ENCODE measurements at regions of chr1 and their contacts with region 1.

Region 1: GRCh38 chr1:59290193-59290947 is 6.5 kb upstream of the FGGY start:
- DNase-seq: peak; percentile 58 to 86
- ATAC-seq: peak; percentile 72 to 85
- H3K4me3 ChIP-seq: no peak overlapping the region
- H3K27ac ChIP-seq: peak overlapping the region; percentile 90 to 99 (median 96)
- H3K4me1 ChIP-seq: peaks cover 27 to 40% of the 10 kb centered on the region in 2 donors
- H3K27me3 ChIP-seq: no peaks in the 10 kb centered on the region
- CTCF ChIP-seq: peak; percentile 11 to 51 (median 35)
- POLR2A ChIP-seq: no peak

Region 2: GRCh38 chr1:59020151-59020997 is 270.0 kb before region 1 on chr1:
- in situ Hi-C with region 1: no loop called
- intact Hi-C with region 1: loop called (anchors 5 kb)
- DNase-seq: peak; percentile 31 to 69
- ATAC-seq: peak; percentile 72 to 73
- H3K4me3 ChIP-seq: peak overlapping the region; percentile 35 to 48 (median 36)
- H3K27ac ChIP-seq: peak overlapping the region; percentile 93 to 96 (median 95)
- H3K4me1 ChIP-seq: peaks cover 25 to 33% of the 10 kb centered on the region in 2 donors
- H3K27me3 ChIP-seq: no peaks in the 10 kb centered on the region
- CTCF ChIP-seq: no peak
- POLR2A ChIP-seq: no peak

Region 3: GRCh38 chr1:59083946-59084865 is 206.2 kb before region 1 on chr1:
- in situ Hi-C with region 1: no loop called
- intact Hi-C with region 1: no loop called
- DNase-seq: no peak
- ATAC-seq: peak; percentile 34 to 51
- H3K4me3 ChIP-seq: no peak overlapping the region
- H3K27ac ChIP-seq: peak overlapping the region in 3 of 4 donors; percentile 12 to 52 (median 24)
- H3K4me1 ChIP-seq: peaks cover 0 to 10% of the 10 kb centered on the region in 2 donors
- H3K27me3 ChIP-seq: no peaks in the 10 kb centered on the region
- CTCF ChIP-seq: no peak
- POLR2A ChIP-seq: no peak

Region 4: GRCh38 chr1:59136541-59137275 is 153.7 kb before region 1 on chr1:
- in situ Hi-C with region 1: loop called in 1 of 4 experiments (anchors 10 kb)
- intact Hi-C with region 1: loop called (anchors 2 kb)
- DNase-seq: peak; percentile 64 to 82
- ATAC-seq: peak; percentile 62 to 74
- H3K4me3 ChIP-seq: no peak overlapping the region
- H3K27ac ChIP-seq: peak overlapping the region; percentile 85 to 91 (median 88)
- H3K4me1 ChIP-seq: peaks cover 32 to 42% of the 10 kb centered on the region in 2 donors
- H3K27me3 ChIP-seq: no peaks in the 10 kb centered on the region
- CTCF ChIP-seq: no peak
- POLR2A ChIP-seq: no peak

Region 5: GRCh38 chr1:59229138-59229537 is 61.2 kb before region 1 on chr1:
- in situ Hi-C with region 1: no loop called
- intact Hi-C with region 1: loop called (anchors 1 kb)
- DNase-seq: no peak
- ATAC-seq: peak; percentile 94 to 95
- H3K4me3 ChIP-seq: no peak overlapping the region
- H3K27ac ChIP-seq: peak overlapping the region; percentile 60 to 81 (median 78)
- H3K4me1 ChIP-seq: peaks cover 30 to 38% of the 10 kb centered on the region in 2 donors
- H3K27me3 ChIP-seq: no peaks in the 10 kb centered on the region
- CTCF ChIP-seq: no peak
- POLR2A ChIP-seq: no peak

Region 6: DNA sequence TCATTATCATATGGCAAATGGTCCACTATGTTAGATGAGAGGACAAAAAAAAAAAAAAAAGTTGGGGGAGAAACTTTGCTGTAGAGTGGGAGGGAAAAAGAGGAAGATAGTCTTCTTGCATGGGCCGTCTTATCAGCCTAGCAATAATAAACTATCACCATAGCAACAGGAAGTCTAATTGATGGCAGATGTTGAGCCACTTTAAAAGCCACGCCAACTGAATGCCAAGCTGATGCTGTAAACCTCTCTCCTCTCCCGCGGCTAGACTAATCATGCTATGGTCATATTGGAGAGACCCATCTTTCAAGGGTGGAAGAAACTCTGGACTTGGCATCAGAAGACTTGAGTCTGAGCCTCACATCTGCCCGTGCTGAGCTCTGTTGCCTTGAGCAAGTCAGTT is 402.2 kb after region 1 on chr1:
- in situ Hi-C with region 1: loop called in 3 of 4 experiments (anchors 10 kb)
- intact Hi-C with region 1: loop called (anchors 2 kb)
- DNase-seq: no peak
- ATAC-seq: no peak
- H3K4me3 ChIP-seq: no peak overlapping the region
- H3K27ac ChIP-seq: peak overlapping the region; percentile 85 to 89 (median 87)
- H3K4me1 ChIP-seq: peaks cover 60 to 63% of the 10 kb centered on the region in 2 donors
- H3K27me3 ChIP-seq: no peaks in the 10 kb centered on the region
- CTCF ChIP-seq: no peak
- POLR2A ChIP-seq: no peak

Region 7: DNA sequence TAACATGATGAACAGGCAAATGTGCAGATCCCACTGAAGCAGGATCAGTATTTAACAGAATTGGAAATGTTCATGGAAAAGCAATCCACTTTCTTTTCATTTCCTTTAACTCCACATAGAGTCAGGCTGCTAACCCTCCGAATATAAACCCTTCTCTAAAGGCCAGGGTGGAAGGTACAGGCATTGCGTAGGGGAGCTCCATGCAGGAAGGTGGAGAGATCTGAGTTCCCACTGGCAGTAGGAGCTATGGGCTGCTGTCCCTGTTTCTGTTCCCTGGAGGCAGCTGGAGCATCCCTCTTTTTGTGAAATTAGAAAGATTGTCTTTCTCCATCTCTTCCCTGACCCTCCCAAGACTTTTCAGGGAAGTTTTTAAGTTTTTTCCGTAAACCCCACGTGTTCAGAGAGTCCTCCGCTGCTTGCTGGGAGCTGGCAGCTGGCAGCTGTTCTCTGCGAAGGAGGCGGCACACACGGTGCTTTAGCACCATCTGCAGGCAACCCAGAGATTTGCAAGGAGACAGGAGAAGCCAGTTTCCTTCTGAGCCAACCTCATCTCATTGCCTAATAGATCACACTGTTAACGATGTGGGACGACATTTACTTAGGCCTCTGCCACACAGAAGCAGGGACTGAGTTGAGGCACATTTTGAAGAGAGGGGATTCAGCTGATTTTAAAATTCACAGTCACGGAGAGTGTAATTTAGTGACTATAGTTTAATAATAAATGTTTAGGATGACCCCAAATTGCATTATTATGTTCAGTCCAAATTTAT is 469.0 kb after region 1 on chr1:
- in situ Hi-C with region 1: no loop called
- intact Hi-C with region 1: loop called (anchors 5 kb)
- DNase-seq: peak; percentile 79 to 85
- ATAC-seq: peak; percentile 94 to 98
- H3K4me3 ChIP-seq: peak overlapping the region; percentile 34 to 55 (median 48)
- H3K27ac ChIP-seq: peak overlapping the region; percentile 77 to 84 (median 80)
- H3K4me1 ChIP-seq: peaks cover 16 to 30% of the 10 kb centered on the region in 2 donors
- H3K27me3 ChIP-seq: no peaks in the 10 kb centered on the region
- CTCF ChIP-seq: peak; percentile 95 to 99 (median 98)
- POLR2A ChIP-seq: no peak

Measured in gastrocnemius medialis (tissue), 4 donors.